MCF 10A (cell line): ENCODE measurements at regions of chr6 and their contacts with region 1.

Region 1: GRCh38 chr6:16277101-16277981 is 39.0 kb downstream of the GMPR start:
- DNase-seq: peak; percentile 92
- H3K4me3 Mint-ChIP-seq: peak overlapping the region; percentile 63
- H3K27ac Mint-ChIP-seq: peak overlapping the region; percentile 81
- H3K4me1 Mint-ChIP-seq: peaks cover 36% of the 10 kb centered on the region
- H3K27me3 Mint-ChIP-seq: no peaks in the 10 kb centered on the region
- CTCF ChIP-seq: peak; percentile 41

Region 2: GRCh38 chr6:15691250-15691869 is 586.0 kb before region 1 on chr6:
- CTCF ChIA-PET with region 1: interaction called, 6 read pairs
- POLR2A ChIA-PET with region 1: no interaction called
- intact Hi-C with region 1: loop called (anchors 5 kb)
- DNase-seq: peak; percentile 86
- H3K4me3 Mint-ChIP-seq: peak overlapping the region; percentile 63
- H3K27ac Mint-ChIP-seq: no peak overlapping the region
- H3K4me1 Mint-ChIP-seq: no peaks in the 10 kb centered on the region
- H3K27me3 Mint-ChIP-seq: no peaks in the 10 kb centered on the region
- CTCF ChIP-seq: peak; percentile 98

Region 3: DNA sequence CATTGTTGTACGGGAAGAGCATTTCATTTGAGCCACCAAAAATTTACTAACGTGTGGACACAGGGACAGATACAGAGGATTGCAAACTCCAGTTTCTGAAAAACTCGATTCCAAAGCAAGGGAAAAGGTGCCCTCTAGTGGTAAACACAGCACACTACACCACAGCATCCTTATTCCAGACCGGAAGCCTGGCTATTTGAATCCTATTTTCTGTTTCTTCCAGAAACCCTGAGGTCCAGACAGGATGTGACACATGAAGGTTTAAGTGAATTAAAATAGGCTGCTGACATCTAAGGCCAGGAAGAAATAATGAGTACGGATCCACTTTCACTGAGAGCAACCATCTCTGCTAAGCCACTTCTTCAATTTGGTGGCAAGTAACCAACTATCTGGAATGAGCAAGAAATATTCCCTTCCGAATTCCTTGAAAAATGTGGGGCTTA is 70.7 kb before region 1 on chr6:
- CTCF ChIA-PET with region 1: interaction called, 12 read pairs
- POLR2A ChIA-PET with region 1: interaction called, 4 read pairs
- intact Hi-C with region 1: no loop called
- DNase-seq: peak; percentile 60
- H3K4me3 Mint-ChIP-seq: no peak overlapping the region
- H3K27ac Mint-ChIP-seq: no peak overlapping the region
- H3K4me1 Mint-ChIP-seq: peaks cover 4% of the 10 kb centered on the region
- H3K27me3 Mint-ChIP-seq: peaks cover 13% of the 10 kb centered on the region
- CTCF ChIP-seq: peak; percentile 76

Region 4: DNA sequence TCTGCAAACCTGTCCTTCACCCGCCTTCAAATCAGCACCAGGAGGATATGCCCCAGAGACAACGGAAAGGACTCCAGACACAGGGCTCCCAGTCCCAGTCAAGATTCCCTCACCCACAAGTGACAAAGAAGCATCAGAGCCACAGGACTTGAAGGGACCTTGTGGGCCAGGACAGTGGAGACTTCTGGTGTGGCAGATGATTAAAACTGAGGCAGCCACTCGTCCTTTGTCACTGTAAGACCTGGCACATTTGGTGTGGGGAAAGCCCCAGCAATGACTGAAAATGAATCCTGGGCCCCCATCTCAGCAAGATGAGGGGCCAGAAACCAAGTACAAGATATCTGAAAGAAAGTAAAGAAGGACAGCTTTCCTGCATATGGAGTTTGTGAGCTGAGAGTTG is 54.5 kb before region 1 on chr6:
- CTCF ChIA-PET with region 1: interaction called, 21 read pairs
- POLR2A ChIA-PET with region 1: no interaction called
- intact Hi-C with region 1: no loop called
- DNase-seq: no peak
- H3K4me3 Mint-ChIP-seq: no peak overlapping the region
- H3K27ac Mint-ChIP-seq: no peak overlapping the region
- H3K4me1 Mint-ChIP-seq: no peaks in the 10 kb centered on the region
- H3K27me3 Mint-ChIP-seq: no peaks in the 10 kb centered on the region
- CTCF ChIP-seq: no peak

Region 5: GRCh38 chr6:16228709-16229665 is 48.4 kb before region 1 on chr6:
- CTCF ChIA-PET with region 1: interaction called, 21 read pairs
- POLR2A ChIA-PET with region 1: no interaction called
- intact Hi-C with region 1: loop called (anchors 1 kb)
- DNase-seq: no peak
- H3K4me3 Mint-ChIP-seq: no peak overlapping the region
- H3K27ac Mint-ChIP-seq: no peak overlapping the region
- H3K4me1 Mint-ChIP-seq: no peaks in the 10 kb centered on the region
- H3K27me3 Mint-ChIP-seq: no peaks in the 10 kb centered on the region
- CTCF ChIP-seq: peak; percentile 30

Region 6: GRCh38 chr6:16238057-16238962 is 39.0 kb before region 1 on chr6 and contains the start of gene GMPR:
- CTCF ChIA-PET with region 1: interaction called, 21 read pairs
- POLR2A ChIA-PET with region 1: interaction called, 7 read pairs
- intact Hi-C with region 1: loop called (anchors 2 kb)
- DNase-seq: no peak
- H3K4me3 Mint-ChIP-seq: peak within 1 kb of the TSS; percentile 79
- H3K27ac Mint-ChIP-seq: peak within 1 kb of the TSS; percentile 87
- H3K4me1 Mint-ChIP-seq: peaks cover 32% of the 10 kb centered on the region
- H3K27me3 Mint-ChIP-seq: no peaks in the 10 kb centered on the region
- CTCF ChIP-seq: no peak
- total RNA-seq, gene GMPR: 1.9 and 3.0 TPM in 2 replicates

Region 7: GRCh38 chr6:16292942-16293341 is 15.6 kb after region 1 on chr6:
- CTCF ChIA-PET with region 1: interaction called, 13 read pairs
- POLR2A ChIA-PET with region 1: interaction called, 4 read pairs
- intact Hi-C with region 1: no loop called
- DNase-seq: peak; percentile 41
- H3K4me3 Mint-ChIP-seq: no peak overlapping the region
- H3K27ac Mint-ChIP-seq: no peak overlapping the region
- H3K4me1 Mint-ChIP-seq: no peaks in the 10 kb centered on the region
- H3K27me3 Mint-ChIP-seq: no peaks in the 10 kb centered on the region
- CTCF ChIP-seq: no peak